B cell (primary cell): ENCODE measurements at regions of chr9 and their contacts with region 1.

Region 1: GRCh38 chr9:113221003-113221799 is at the starts of genes FKBP15 and SLC31A1:
- DNase-seq: peak; percentile 98
- ATAC-seq: peak; percentile 98
- H3K4me3 ChIP-seq: peak within 1 kb of the TSS; percentile 77 to 97 (median 94)
- H3K4me3 Mint-ChIP-seq: peak within 1 kb of the TSS; percentile 95
- H3K27ac ChIP-seq: peak within 1 kb of the TSS; percentile 59 to 84
- H3K27ac Mint-ChIP-seq: peak within 1 kb of the TSS; percentile 95
- H3K4me1 ChIP-seq: peaks cover 33 to 35% of the 10 kb centered on the region in 2 donors
- H3K4me1 Mint-ChIP-seq: peaks cover 48% of the 10 kb centered on the region
- H3K27me3 ChIP-seq: no peaks in the 10 kb centered on the region
- H3K27me3 Mint-ChIP-seq: no peaks in the 10 kb centered on the region
- CTCF ChIP-seq: no peak
- total RNA-seq, gene FKBP15: 40.6 and 41.2 TPM in 2 replicates
- total RNA-seq, gene SLC31A1: 3.2 and 3.5 TPM in 2 replicates

Region 2: DNA sequence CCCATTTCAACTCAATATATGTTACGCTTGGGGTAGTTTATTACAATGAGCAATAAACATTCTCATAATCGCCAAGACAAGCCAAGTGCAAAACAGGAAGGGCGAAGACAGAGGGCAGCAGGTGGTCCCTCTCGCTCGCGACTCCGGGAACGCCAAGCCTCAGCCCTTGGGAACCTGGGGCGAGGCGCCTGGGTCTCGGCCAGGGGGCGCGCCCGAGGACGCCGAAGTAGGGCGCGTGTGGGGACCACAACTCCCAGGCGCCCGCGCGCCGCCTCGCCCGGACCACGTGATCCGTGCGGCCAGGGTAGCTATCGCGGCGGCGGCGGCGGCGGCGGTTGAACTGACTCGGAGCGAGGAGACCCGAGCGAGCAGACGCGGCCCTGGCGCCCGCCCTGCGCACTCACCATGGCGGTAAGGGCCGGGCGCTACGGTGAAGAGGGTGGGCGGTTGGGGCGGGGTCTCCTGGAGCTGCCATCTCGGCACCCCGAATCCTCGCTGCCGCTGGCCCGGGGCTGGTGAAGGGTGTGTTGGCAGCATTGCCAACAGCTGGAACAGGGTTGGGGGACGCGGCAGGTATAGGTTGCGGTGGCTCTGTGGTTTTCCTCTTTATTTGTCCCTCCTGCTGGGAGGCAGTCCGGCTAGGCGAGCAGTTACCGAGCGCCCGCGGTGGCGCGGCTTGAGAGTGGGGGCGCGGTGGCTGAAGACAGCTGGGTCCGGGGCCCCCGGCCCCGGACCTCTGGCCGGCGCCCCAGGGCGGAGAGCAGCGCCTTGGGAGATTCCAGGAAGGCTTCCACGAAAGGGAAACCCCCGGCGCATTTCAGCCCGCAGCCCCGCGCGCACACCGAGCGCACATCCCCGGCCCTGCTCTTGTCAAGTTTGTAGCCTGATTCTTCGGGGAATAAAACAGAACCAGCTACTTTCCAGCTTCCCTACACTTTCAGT is 70.3 kb before region 1 on chr9 and contains the start of gene SLC31A2:
- CTCF ChIA-PET with region 1: interaction called, 6 read pairs
- POLR2A ChIA-PET with region 1: no interaction called
- intact Hi-C with region 1: loop called (anchors 1 kb)
- DNase-seq: peak; percentile 85
- ATAC-seq: peak; percentile 93
- H3K4me3 ChIP-seq: peak within 1 kb of the TSS; percentile 73 to 83 (median 76)
- H3K4me3 Mint-ChIP-seq: peak within 1 kb of the TSS; percentile 88
- H3K27ac ChIP-seq: peak within 1 kb of the TSS in 1 of 2 donors; percentile 25
- H3K27ac Mint-ChIP-seq: peak within 1 kb of the TSS; percentile 50
- H3K4me1 ChIP-seq: peaks cover 0 to 19% of the 10 kb centered on the region in 2 donors
- H3K4me1 Mint-ChIP-seq: peaks cover 11% of the 10 kb centered on the region
- H3K27me3 ChIP-seq: no peaks in the 10 kb centered on the region
- H3K27me3 Mint-ChIP-seq: peaks cover 2% of the 10 kb centered on the region
- CTCF ChIP-seq: peak; percentile 56
- total RNA-seq, gene SLC31A2: 2.3 and 3.0 TPM in 2 replicates

Region 3: DNA sequence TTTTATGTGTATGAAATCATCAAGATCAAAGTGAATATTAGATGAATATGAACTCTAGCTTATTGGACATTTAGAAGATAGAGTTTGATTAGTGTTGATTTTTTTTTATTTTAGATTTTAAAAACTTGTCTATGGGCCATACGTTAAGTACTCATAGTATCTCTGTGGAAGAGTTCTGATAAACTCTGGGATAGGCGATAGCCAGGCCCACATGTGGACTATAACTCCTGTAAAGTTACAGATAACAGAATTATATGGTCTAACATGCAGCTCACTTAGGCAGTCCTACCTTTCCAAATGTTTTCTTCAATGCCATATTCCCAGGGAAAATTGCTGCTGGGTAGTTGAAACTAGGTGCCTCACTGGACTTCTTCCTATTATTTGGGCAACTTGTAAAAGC is 10.5 kb after region 1 on chr9:
- CTCF ChIA-PET with region 1: interaction called, 5 read pairs
- POLR2A ChIA-PET with region 1: interaction called, 7 read pairs
- intact Hi-C with region 1: loop called (anchors 1 kb)
- DNase-seq: no peak
- ATAC-seq: no peak
- H3K4me3 ChIP-seq: no peak overlapping the region
- H3K4me3 Mint-ChIP-seq: no peak overlapping the region
- H3K27ac ChIP-seq: no peak overlapping the region
- H3K27ac Mint-ChIP-seq: no peak overlapping the region
- H3K4me1 ChIP-seq: peaks cover 11 to 13% of the 10 kb centered on the region in 2 donors
- H3K4me1 Mint-ChIP-seq: peaks cover 26% of the 10 kb centered on the region
- H3K27me3 ChIP-seq: no peaks in the 10 kb centered on the region
- H3K27me3 Mint-ChIP-seq: no peaks in the 10 kb centered on the region
- CTCF ChIP-seq: no peak